Caco-2 (cell line): ENCODE measurements at regions of chr14 and their contacts with region 1.

Region 1: DNA sequence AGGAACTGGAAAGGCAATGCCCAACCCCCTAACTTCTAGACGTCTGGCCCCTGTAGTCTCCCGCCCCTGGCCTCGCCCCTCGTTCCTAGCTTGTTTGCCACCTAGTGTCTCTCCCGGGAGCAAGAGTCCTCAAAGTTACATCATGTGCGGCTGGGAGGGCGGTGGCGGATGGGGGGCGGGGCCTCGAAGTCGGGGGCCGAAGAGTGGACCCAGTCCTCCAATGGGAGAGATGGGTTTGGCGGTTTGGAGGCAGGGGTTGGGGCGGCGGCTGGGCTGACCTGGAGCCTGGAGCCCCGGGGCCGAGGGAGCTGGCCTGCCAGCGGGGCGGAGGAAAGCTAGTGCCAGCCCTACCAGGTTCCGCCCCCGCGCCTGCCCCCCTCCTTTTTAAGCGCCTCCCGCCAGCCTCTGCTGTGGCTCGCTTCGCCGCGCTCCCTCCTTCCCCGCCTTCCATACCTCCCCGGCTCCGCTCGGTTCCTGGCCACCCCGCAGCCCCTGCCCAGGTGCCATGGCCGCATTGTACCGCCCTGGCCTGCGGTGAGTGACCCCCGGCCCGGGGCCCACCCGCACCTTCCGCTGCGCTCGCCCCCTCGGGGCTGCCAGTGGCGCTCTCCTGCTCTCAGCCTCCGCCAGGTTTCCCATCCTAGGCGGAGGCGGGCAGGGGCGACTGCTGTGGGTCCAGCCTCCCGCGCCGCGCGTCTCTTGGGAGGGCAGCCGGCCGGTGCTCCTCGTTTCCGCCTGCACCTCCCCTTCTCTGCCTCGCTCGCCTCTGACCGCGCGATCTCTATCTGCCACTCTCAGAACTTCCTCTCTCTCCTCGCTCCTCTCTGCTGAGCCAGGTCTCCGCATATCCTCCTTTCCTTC is at the start of gene PCK2:
- DNase-seq: peak; percentile 98
- H3K4me3 ChIP-seq: peak within 1 kb of the TSS; percentile 60
- H3K4me3 Mint-ChIP-seq: peak within 1 kb of the TSS; percentile 97
- H3K27ac Mint-ChIP-seq: peak within 1 kb of the TSS; percentile 99
- H3K4me1 ChIP-seq: peaks cover 21% of the 10 kb centered on the region
- H3K4me1 Mint-ChIP-seq: peaks cover 24% of the 10 kb centered on the region
- H3K27me3 ChIP-seq: no peaks in the 10 kb centered on the region
- H3K27me3 Mint-ChIP-seq: no peaks in the 10 kb centered on the region
- CTCF ChIP-seq: no peak
- total RNA-seq, gene PCK2: 132 and 146 TPM in 2 replicates

Region 2: GRCh38 chr14:23933108-23933741 is 160.9 kb before region 1 on chr14:
- CTCF ChIA-PET with region 1: no interaction called
- POLR2A ChIA-PET with region 1: no interaction called
- intact Hi-C with region 1: no loop called
- DNase-seq: no peak
- H3K4me3 ChIP-seq: no peak overlapping the region
- H3K4me3 Mint-ChIP-seq: no peak overlapping the region
- H3K27ac Mint-ChIP-seq: no peak overlapping the region
- H3K4me1 ChIP-seq: peaks cover 5% of the 10 kb centered on the region
- H3K4me1 Mint-ChIP-seq: no peaks in the 10 kb centered on the region
- H3K27me3 ChIP-seq: no peaks in the 10 kb centered on the region
- H3K27me3 Mint-ChIP-seq: peaks cover 2% of the 10 kb centered on the region
- CTCF ChIP-seq: no peak

Region 3: GRCh38 chr14:24013654-24014514 is 80.2 kb before region 1 on chr14:
- CTCF ChIA-PET with region 1: no interaction called
- POLR2A ChIA-PET with region 1: no interaction called
- intact Hi-C with region 1: loop called (anchors 2 kb)
- DNase-seq: peak; percentile 52 to 77
- H3K4me3 ChIP-seq: no peak overlapping the region
- H3K4me3 Mint-ChIP-seq: no peak overlapping the region
- H3K27ac Mint-ChIP-seq: no peak overlapping the region
- H3K4me1 ChIP-seq: no peaks in the 10 kb centered on the region
- H3K4me1 Mint-ChIP-seq: no peaks in the 10 kb centered on the region
- H3K27me3 ChIP-seq: no peaks in the 10 kb centered on the region
- H3K27me3 Mint-ChIP-seq: peaks cover 5% of the 10 kb centered on the region
- CTCF ChIP-seq: peak; percentile 66 to 83

Region 4: GRCh38 chr14:24067145-24068082 is 26.7 kb before region 1 on chr14:
- CTCF ChIA-PET with region 1: interaction called, 7 read pairs
- POLR2A ChIA-PET with region 1: interaction called, 13 read pairs
- intact Hi-C with region 1: no loop called
- DNase-seq: no peak
- H3K4me3 ChIP-seq: no peak overlapping the region
- H3K4me3 Mint-ChIP-seq: no peak overlapping the region
- H3K27ac Mint-ChIP-seq: peak overlapping the region; percentile 25
- H3K4me1 ChIP-seq: peaks cover 14% of the 10 kb centered on the region; the same call in 1 of the 2 replicates
- H3K4me1 Mint-ChIP-seq: peaks cover 6% of the 10 kb centered on the region
- H3K27me3 ChIP-seq: no peaks in the 10 kb centered on the region
- H3K27me3 Mint-ChIP-seq: no peaks in the 10 kb centered on the region
- CTCF ChIP-seq: no peak

Region 5: GRCh38 chr14:24108336-24108874 is 14.3 kb after region 1 on chr14:
- CTCF ChIA-PET with region 1: interaction called, 93 read pairs
- POLR2A ChIA-PET with region 1: interaction called, 72 read pairs
- intact Hi-C with region 1: no loop called
- DNase-seq: no peak
- H3K4me3 ChIP-seq: no peak overlapping the region
- H3K4me3 Mint-ChIP-seq: no peak overlapping the region
- H3K27ac Mint-ChIP-seq: no peak overlapping the region
- H3K4me1 ChIP-seq: peaks cover 8% of the 10 kb centered on the region; the same call in 1 of the 2 replicates
- H3K4me1 Mint-ChIP-seq: no peaks in the 10 kb centered on the region
- H3K27me3 ChIP-seq: no peaks in the 10 kb centered on the region
- H3K27me3 Mint-ChIP-seq: no peaks in the 10 kb centered on the region
- CTCF ChIP-seq: no peak

Region 6: GRCh38 chr14:24135834-24136542 is 41.9 kb after region 1 on chr14 and contains the start of gene PSME1:
- CTCF ChIA-PET with region 1: interaction called, 6 read pairs
- POLR2A ChIA-PET with region 1: interaction called, 13 read pairs
- intact Hi-C with region 1: no loop called
- DNase-seq: peak; percentile 94 to 95
- H3K4me3 ChIP-seq: peak within 1 kb of the TSS; percentile 90
- H3K4me3 Mint-ChIP-seq: peak within 1 kb of the TSS; percentile 77
- H3K27ac Mint-ChIP-seq: peak within 1 kb of the TSS; percentile 57
- H3K4me1 ChIP-seq: no peaks in the 10 kb centered on the region; the same call in 1 of the 2 replicates
- H3K4me1 Mint-ChIP-seq: peaks cover 32% of the 10 kb centered on the region
- H3K27me3 ChIP-seq: no peaks in the 10 kb centered on the region
- H3K27me3 Mint-ChIP-seq: no peaks in the 10 kb centered on the region
- CTCF ChIP-seq: no peak
- total RNA-seq, gene PSME1: 130 and 141 TPM in 2 replicates